Dorsolateral prefrontal cortex (tissue), 120 donors: ENCODE measurements at regions of chr11 and their contacts with region 1.

Region 1: DNA sequence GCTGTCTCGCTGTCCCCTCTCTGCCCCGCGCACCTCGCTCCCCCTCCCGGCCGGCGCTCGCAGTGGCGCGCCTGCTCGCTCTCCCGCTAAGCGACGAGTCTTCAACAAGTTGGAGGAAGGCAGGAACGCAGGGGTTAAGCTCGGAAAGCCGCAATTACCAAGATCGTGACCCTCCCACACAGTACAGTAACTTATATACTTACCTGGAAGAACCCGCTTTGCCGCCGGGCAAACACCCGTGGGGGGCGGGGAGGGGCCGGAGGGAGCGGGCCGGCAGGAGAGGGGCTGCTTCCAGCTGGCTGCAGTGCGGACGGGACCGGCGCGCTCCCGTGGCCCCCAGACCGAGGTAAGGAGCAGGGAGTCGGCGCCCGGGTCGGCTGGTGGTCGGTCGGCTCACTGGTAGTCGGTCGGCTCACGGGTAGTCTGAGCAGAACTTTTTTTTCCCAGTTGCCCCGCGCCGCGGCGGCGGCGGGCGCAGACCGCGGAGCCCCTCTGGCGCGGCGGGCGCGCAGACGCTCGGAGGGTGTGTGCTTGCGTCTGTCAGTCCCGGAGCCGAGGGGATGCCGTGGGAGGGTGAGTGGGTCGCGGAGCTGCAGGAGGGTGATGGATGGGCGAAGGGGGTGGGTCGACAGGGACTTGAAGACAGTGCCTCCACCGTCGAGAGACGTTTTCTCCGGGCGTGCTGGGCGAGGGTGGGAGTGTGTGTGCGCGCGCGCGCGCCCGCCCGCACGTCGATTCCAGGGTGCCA is 101.2 kb upstream of the HSD17B12 start:
- DNase-seq: peak in 2 of 10 donors; percentile 23 to 31
- H3K4me3 ChIP-seq: peak overlapping the region; percentile 37 to 77 (median 58)
- H3K27ac ChIP-seq: peak overlapping the region in 4 of 59 donors; percentile 4 to 84 (median 36)
- H3K27me3 ChIP-seq: peaks cover 0 to 99% (median 69%) of the 10 kb centered on the region in 45 donors
- CTCF ChIP-seq: peak in 4 of 56 donors; percentile 9 to 20 (median 14)

Region 2: GRCh38 chr11:43376594-43376993 is 202.8 kb before region 1 on chr11:
- intact Hi-C with region 1: no loop called
- DNase-seq: no peak
- H3K4me3 ChIP-seq: no peak overlapping the region
- H3K27ac ChIP-seq: no peak overlapping the region
- H3K27me3 ChIP-seq: no peaks in the 10 kb centered on the region
- CTCF ChIP-seq: no peak

Region 3: GRCh38 chr11:43802509-43802908 is 223.2 kb after region 1 on chr11:
- intact Hi-C with region 1: loop called in 1 of 2 experiments (anchors 10 kb)
- DNase-seq: no peak
- H3K4me3 ChIP-seq: no peak overlapping the region
- H3K27ac ChIP-seq: no peak overlapping the region
- H3K27me3 ChIP-seq: no peaks in the 10 kb centered on the region
- CTCF ChIP-seq: peak in 6 of 56 donors; percentile 4 to 27 (median 12)

Region 4: DNA sequence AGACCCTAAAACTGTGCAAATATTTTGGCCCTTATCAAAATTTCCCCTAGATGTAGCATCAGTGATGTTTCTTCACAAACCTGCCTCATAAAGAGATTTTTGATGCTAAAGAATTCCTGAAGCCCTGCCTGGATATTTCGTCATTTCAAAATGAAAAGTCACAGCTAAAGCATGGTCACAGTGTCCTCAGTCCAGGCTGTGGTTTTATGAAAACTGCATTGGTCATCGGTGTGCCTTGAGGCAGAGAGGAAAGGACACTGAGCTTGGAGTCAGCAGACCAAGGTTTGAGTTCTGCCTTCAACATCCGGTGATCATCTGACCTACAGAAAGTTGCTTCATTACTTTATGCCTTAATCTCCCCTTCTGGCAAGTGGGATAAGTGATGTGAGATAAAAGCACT is 266.5 kb after region 1 on chr11:
- intact Hi-C with region 1: loop called in 1 of 2 experiments (anchors 10 kb)
- DNase-seq: no peak
- H3K4me3 ChIP-seq: no peak overlapping the region
- H3K27ac ChIP-seq: no peak overlapping the region
- H3K27me3 ChIP-seq: no peaks in the 10 kb centered on the region
- CTCF ChIP-seq: no peak

Region 5: GRCh38 chr11:43879789-43880639 is 300.7 kb after region 1 on chr11:
- intact Hi-C with region 1: loop called in 1 of 2 experiments (anchors 10 kb)
- DNase-seq: no peak
- H3K4me3 ChIP-seq: peak overlapping the region; percentile 62 to 100 (median 90)
- H3K27ac ChIP-seq: peak overlapping the region in 28 of 59 donors; percentile 4 to 90 (median 50)
- H3K27me3 ChIP-seq: peaks cover 0 to 41% (median 9%) of the 10 kb centered on the region in 45 donors
- CTCF ChIP-seq: no peak